ENCODE measurements at regions of chr2 and their contacts with region 1.

Region 1: DNA sequence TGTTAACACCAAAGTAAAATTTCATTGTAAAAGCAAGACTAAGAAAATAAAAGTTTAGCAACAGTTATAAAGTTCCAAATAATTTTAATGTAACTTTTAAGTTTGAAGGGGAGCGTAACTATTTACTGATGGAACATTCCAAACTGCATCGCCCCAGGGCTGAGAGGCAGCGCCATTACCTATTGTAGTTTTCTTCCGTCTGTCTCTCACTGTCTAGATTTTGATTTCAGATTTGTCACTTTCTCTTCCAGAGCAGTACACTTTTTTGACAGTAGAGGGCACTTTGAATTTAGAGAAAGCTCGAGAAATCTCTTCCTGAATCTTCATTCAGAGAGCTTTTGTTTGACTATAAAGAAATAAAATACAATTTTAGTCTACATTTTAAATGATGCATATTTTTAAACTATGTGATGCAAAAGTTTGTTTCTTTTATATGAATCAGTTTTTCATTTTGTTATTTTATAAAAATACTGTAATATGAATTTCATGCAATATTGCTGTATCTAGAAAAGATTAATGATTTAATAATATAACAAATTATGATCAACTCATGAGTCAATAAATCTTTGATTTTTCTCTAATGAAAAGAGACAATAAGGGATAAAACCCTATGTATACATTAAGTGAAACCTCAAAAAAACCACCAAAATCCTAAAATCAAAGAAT is 389.8 kb downstream of the FIGN start:
- DNase-seq: peak in 1 of 10 donors; percentile 26
- H3K4me3 ChIP-seq: peak overlapping the region in 1 of 59 donors; percentile 30
- H3K27ac ChIP-seq: peak overlapping the region in 1 of 59 donors; percentile 4
- H3K27me3 ChIP-seq: no peaks in the 10 kb centered on the region
- CTCF ChIP-seq: peak; percentile 79 to 96 (median 89)

Region 2: GRCh38 chr2:164430166-164430783 is 1084.2 kb after region 1 on chr2:
- intact Hi-C with region 1: loop called (anchors 5 kb)
- DNase-seq: peak in 3 of 10 donors; percentile 14 to 59 (median 42)
- H3K4me3 ChIP-seq: no peak overlapping the region
- H3K27ac ChIP-seq: no peak overlapping the region
- H3K27me3 ChIP-seq: peaks cover 0 to 11% (median 0%) of the 10 kb centered on the region in 45 donors
- CTCF ChIP-seq: peak in 55 of 56 donors; percentile 29 to 79 (median 64)

Region 3: GRCh38 chr2:164495491-164496223 is 1149.6 kb after region 1 on chr2:
- intact Hi-C with region 1: loop called in 1 of 2 experiments (anchors 10 kb)
- DNase-seq: peak in 2 of 10 donors; percentile 4 to 45
- H3K4me3 ChIP-seq: peak overlapping the region in 23 of 59 donors; percentile 3 to 45 (median 23)
- H3K27ac ChIP-seq: peak overlapping the region in 55 of 59 donors; percentile 1 to 90 (median 72)
- H3K27me3 ChIP-seq: no peaks in the 10 kb centered on the region
- CTCF ChIP-seq: peak; percentile 53 to 92 (median 77)

Measured in dorsolateral prefrontal cortex (tissue), 120 donors.